WTC11 (cell line): ENCODE measurements at regions of chr1 and their contacts with region 1.

Region 1: GRCh38 chr1:63773815-63774616 is at the start of gene ROR1:
- DNase-seq: peak; percentile 95
- ATAC-seq: peak; percentile 83
- H3K4me3 Mint-ChIP-seq: peak within 1 kb of the TSS; percentile 95
- H3K27ac Mint-ChIP-seq: peak within 1 kb of the TSS; percentile 99
- H3K4me1 Mint-ChIP-seq: peaks cover 58% of the 10 kb centered on the region
- H3K27me3 Mint-ChIP-seq: no peaks in the 10 kb centered on the region
- CTCF ChIP-seq: no peak
- total RNA-seq, gene ROR1: 54.6 to 56.3 TPM (median 55.2 TPM) in 3 replicates

Region 2: GRCh38 chr1:63794939-63795378 is 20.9 kb after region 1 on chr1:
- CTCF ChIA-PET with region 1: interaction called, 14 read pairs
- POLR2A ChIA-PET with region 1: interaction called, 4 read pairs
- DNase-seq: peak; percentile 42
- ATAC-seq: peak; percentile 51
- H3K4me3 Mint-ChIP-seq: peak overlapping the region; percentile 39
- H3K27ac Mint-ChIP-seq: peak overlapping the region; percentile 98
- H3K4me1 Mint-ChIP-seq: peaks cover 98% of the 10 kb centered on the region
- H3K27me3 Mint-ChIP-seq: no peaks in the 10 kb centered on the region
- CTCF ChIP-seq: no peak

Region 3: GRCh38 chr1:64033667-64034220 is 259.7 kb after region 1 on chr1:
- CTCF ChIA-PET with region 1: no interaction called
- POLR2A ChIA-PET with region 1: no interaction called
- DNase-seq: no peak
- ATAC-seq: no peak
- H3K4me3 Mint-ChIP-seq: no peak overlapping the region
- H3K27ac Mint-ChIP-seq: no peak overlapping the region
- H3K4me1 Mint-ChIP-seq: peaks cover 17% of the 10 kb centered on the region
- H3K27me3 Mint-ChIP-seq: no peaks in the 10 kb centered on the region
- CTCF ChIP-seq: no peak